Activated B cell treated with CpG ODN at 0.5 μM for 24 hours (primary cell): ENCODE measurements at regions of chr5 and their contacts with region 1.

Region 1: DNA sequence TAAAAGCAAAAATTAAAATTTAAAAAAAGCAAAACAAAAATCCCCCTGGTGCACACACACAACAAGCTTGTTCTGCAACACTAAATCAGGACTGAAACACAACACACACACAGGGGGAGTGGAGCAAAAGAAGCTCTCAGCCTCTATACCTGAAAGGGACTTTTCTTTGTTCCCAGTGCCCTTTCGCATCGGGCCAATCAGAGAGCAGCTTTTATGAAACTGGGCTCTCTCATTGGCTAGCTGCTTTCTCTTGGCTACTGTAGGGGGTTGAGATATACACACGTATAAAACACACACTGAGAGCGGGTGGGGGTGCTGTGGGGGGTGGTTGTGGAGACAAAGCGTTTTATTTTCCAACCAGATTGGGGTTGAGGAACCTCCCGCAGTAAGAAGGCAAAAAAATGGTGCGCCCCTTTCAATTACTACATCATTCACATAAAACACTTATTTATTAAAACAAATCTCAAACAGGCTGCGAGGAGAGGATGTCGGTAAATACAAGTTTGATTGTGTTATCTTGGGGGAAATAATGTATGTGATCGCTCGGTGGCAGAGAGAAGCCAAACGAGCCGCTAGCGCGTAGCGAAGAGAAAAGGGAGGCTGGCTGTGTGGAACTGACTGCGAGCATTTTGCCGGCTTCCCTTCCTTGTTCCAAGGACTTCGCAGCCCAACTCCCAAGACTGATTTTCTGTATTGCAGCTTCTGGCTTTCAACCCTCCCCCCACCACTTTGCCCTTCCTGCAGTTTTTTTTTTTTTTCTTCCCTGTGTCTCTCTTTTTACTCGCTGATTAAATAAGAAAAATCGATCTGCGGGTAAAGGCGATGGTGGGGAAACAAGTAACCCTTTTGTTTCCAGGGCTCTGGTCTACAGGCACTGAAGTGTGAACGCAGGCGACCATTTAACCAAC is 2.5 kb upstream of the ZNF608 start:
- DNase-seq: peak; percentile 37
- ATAC-seq: peak; percentile 71
- H3K4me3 Mint-ChIP-seq: no peak overlapping the region
- H3K27ac Mint-ChIP-seq: no peak overlapping the region
- H3K4me1 Mint-ChIP-seq: peaks cover 17% of the 10 kb centered on the region
- H3K27me3 Mint-ChIP-seq: no peaks in the 10 kb centered on the region
- CTCF ChIP-seq: no peak

Region 2: GRCh38 chr5:122965111-122965510 is 1783.8 kb before region 1 on chr5:
- CTCF ChIA-PET with region 1: no interaction called
- POLR2A ChIA-PET with region 1: no interaction called
- intact Hi-C with region 1: no loop called
- DNase-seq: no peak
- ATAC-seq: no peak
- H3K4me3 Mint-ChIP-seq: no peak overlapping the region
- H3K27ac Mint-ChIP-seq: no peak overlapping the region
- H3K4me1 Mint-ChIP-seq: peaks cover 13% of the 10 kb centered on the region
- H3K27me3 Mint-ChIP-seq: no peaks in the 10 kb centered on the region
- CTCF ChIP-seq: no peak

Region 3: GRCh38 chr5:123671042-123671441 is 1077.9 kb before region 1 on chr5:
- CTCF ChIA-PET with region 1: no interaction called
- POLR2A ChIA-PET with region 1: no interaction called
- intact Hi-C with region 1: loop called (anchors 2 kb)
- DNase-seq: no peak
- ATAC-seq: peak; percentile 37
- H3K4me3 Mint-ChIP-seq: no peak overlapping the region
- H3K27ac Mint-ChIP-seq: no peak overlapping the region
- H3K4me1 Mint-ChIP-seq: peaks cover 3% of the 10 kb centered on the region
- H3K27me3 Mint-ChIP-seq: no peaks in the 10 kb centered on the region
- CTCF ChIP-seq: peak; percentile 92

Region 4: DNA sequence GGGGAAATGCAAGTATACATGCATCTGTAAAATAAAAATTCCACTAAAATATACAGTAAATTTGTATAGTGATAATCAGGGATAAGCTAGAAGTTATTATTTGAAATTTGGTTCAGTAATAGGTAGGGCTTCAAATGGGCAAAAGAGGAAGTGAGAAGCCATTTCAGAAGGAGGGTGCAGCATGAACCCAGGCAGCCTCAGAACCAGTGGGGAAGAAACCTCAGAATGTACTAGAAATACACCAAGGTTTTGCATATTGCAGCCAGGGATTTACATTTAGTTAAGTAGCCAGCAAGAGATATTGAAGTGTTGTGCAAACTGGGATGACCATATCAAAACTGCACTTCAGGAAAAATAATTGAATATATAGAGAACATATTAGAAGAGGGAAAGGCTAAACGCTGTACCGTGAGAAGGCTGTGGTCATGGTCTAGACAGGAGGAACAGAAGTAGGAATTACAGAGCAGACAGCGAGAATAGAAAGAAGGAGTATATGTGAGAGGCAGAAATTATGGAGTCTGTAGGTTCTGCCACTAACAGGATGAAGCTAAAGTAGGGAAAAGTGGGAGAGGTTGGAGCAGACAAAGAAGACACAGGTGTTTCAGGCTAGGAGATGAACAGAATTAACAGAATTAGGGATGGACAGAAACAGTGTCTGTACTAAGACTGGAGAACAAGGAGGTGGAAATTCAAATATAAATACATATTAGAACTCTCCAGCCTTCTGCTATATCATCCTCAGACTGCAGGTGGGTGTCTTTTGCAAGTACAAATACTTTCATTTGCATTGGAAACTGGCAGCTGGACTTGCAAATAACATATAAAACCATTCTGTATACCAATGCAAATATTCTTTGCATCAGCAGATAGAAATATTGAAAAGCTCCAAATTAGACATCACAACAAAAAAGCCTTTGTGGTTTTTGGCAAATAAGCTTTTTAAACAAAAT is 338.1 kb before region 1 on chr5:
- CTCF ChIA-PET with region 1: no interaction called
- POLR2A ChIA-PET with region 1: no interaction called
- intact Hi-C with region 1: loop called (anchors 1 kb)
- DNase-seq: no peak
- ATAC-seq: peak; percentile 96
- H3K4me3 Mint-ChIP-seq: peak overlapping the region; percentile 51
- H3K27ac Mint-ChIP-seq: no peak overlapping the region
- H3K4me1 Mint-ChIP-seq: peaks cover 24% of the 10 kb centered on the region
- H3K27me3 Mint-ChIP-seq: peaks cover 3% of the 10 kb centered on the region
- CTCF ChIP-seq: no peak

Region 5: DNA sequence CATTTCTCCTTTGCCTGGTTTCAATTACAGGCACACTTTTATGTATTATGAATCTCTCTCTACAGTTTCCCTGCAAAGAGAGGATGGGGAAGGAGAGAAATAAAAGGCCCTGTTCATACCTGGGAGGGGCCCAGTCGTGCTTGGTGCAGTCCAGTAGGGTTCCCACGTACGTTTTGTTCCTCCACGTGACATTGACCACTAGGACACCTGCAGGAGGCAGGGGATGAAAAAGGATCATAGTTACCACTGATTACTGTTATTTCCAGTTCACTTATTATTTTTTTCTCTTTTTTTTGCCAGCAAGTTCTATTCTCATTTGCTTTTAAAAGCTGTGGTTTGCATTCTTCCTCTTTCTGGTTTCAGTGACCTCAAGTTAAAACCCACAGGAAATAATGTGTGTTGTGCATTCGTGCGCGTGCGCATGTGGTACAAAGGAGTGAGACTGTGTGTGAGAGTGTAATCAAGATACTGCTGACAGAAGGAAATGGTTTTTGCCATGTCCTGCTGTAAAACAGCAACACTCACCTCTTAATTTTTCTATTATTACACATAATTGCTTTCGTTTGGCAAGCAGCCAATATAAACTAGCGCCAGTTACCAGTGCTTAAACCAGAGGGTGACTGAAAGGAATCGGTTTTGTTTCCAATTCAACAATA is 99.3 kb before region 1 on chr5:
- CTCF ChIA-PET with region 1: interaction called, 10 read pairs
- POLR2A ChIA-PET with region 1: interaction called, 26 read pairs
- intact Hi-C with region 1: loop called (anchors 1 kb)
- DNase-seq: peak; percentile 70
- ATAC-seq: peak; percentile 76
- H3K4me3 Mint-ChIP-seq: peak overlapping the region; percentile 66
- H3K27ac Mint-ChIP-seq: peak overlapping the region; percentile 84
- H3K4me1 Mint-ChIP-seq: peaks cover 78% of the 10 kb centered on the region
- H3K27me3 Mint-ChIP-seq: no peaks in the 10 kb centered on the region
- CTCF ChIP-seq: no peak

Region 6: GRCh38 chr5:124824637-124825158 is 75.8 kb after region 1 on chr5:
- CTCF ChIA-PET with region 1: no interaction called
- POLR2A ChIA-PET with region 1: interaction called, 18 read pairs
- intact Hi-C with region 1: loop called (anchors 1 kb)
- DNase-seq: no peak
- ATAC-seq: no peak
- H3K4me3 Mint-ChIP-seq: no peak overlapping the region
- H3K27ac Mint-ChIP-seq: peak overlapping the region; percentile 74
- H3K4me1 Mint-ChIP-seq: peaks cover 17% of the 10 kb centered on the region
- H3K27me3 Mint-ChIP-seq: no peaks in the 10 kb centered on the region
- CTCF ChIP-seq: no peak

Region 7: DNA sequence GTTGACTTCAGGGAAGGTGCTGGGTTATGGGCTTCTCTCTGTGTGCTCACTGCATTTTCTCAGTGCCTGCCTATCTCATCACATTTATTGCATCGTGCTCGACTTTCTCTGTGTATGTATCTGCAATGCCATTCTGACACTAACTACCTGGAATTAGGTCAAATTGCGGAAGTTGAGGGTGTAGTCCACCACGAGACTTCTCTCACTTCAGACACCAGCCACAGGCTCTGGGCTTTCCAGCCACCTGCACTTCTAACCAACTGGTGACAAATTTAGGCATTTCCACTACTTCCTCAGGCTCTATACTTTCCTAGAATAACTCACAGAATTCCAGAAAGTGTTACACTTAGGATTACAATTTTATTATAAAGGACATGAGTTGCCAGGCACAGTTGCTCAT is 186.1 kb after region 1 on chr5:
- CTCF ChIA-PET with region 1: no interaction called
- POLR2A ChIA-PET with region 1: interaction called, 38 read pairs
- intact Hi-C with region 1: loop called (anchors 1 kb)
- DNase-seq: no peak
- ATAC-seq: peak; percentile 63
- H3K4me3 Mint-ChIP-seq: peak overlapping the region; percentile 38
- H3K27ac Mint-ChIP-seq: peak overlapping the region; percentile 94
- H3K4me1 Mint-ChIP-seq: peaks cover 24% of the 10 kb centered on the region
- H3K27me3 Mint-ChIP-seq: no peaks in the 10 kb centered on the region
- CTCF ChIP-seq: no peak

Region 8: GRCh38 chr5:125160787-125161502 is 412.0 kb after region 1 on chr5:
- CTCF ChIA-PET with region 1: no interaction called
- POLR2A ChIA-PET with region 1: no interaction called
- intact Hi-C with region 1: no loop called
- DNase-seq: no peak
- ATAC-seq: no peak
- H3K4me3 Mint-ChIP-seq: no peak overlapping the region
- H3K27ac Mint-ChIP-seq: no peak overlapping the region
- H3K4me1 Mint-ChIP-seq: no peaks in the 10 kb centered on the region
- H3K27me3 Mint-ChIP-seq: no peaks in the 10 kb centered on the region
- CTCF ChIP-seq: no peak

Region 9: DNA sequence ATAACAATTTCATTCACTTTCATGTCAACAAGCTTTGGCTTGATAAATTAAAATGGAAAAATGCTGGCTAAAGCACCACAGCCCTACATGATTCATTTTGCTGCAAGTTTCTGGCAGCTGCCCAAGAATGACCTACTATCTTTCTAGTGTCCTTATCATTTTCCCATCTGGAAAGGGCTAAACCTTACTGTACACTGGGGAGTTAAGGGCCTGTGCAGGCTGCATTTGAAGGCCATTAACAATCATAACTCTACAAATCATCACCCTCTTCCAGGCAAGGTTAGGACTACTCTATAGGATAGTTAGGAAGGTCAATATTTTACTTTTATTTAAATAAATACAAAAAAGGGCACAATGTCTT is 577.2 kb after region 1 on chr5:
- CTCF ChIA-PET with region 1: no interaction called
- POLR2A ChIA-PET with region 1: no interaction called
- intact Hi-C with region 1: no loop called
- DNase-seq: no peak
- ATAC-seq: no peak
- H3K4me3 Mint-ChIP-seq: no peak overlapping the region
- H3K27ac Mint-ChIP-seq: no peak overlapping the region
- H3K4me1 Mint-ChIP-seq: no peaks in the 10 kb centered on the region
- H3K27me3 Mint-ChIP-seq: no peaks in the 10 kb centered on the region
- CTCF ChIP-seq: no peak

Region 10: GRCh38 chr5:125835293-125836172 is 1086.6 kb after region 1 on chr5:
- CTCF ChIA-PET with region 1: interaction called, 7 read pairs
- POLR2A ChIA-PET with region 1: interaction called, 4 read pairs
- intact Hi-C with region 1: loop called (anchors 1 kb)
- DNase-seq: no peak
- ATAC-seq: peak; percentile 56
- H3K4me3 Mint-ChIP-seq: no peak overlapping the region
- H3K27ac Mint-ChIP-seq: no peak overlapping the region
- H3K4me1 Mint-ChIP-seq: peaks cover 3% of the 10 kb centered on the region
- H3K27me3 Mint-ChIP-seq: peaks cover 6% of the 10 kb centered on the region
- CTCF ChIP-seq: no peak